Dendritic cell treated with granulocyte-macrophage colony-stimulating factor and Interleukin-4, amounts not matched to agents 40 ng/mL and 50 ng/mL, for 4 days (primary cell): ENCODE measurements at regions of chr16 and their contacts with region 1.

Region 1: DNA sequence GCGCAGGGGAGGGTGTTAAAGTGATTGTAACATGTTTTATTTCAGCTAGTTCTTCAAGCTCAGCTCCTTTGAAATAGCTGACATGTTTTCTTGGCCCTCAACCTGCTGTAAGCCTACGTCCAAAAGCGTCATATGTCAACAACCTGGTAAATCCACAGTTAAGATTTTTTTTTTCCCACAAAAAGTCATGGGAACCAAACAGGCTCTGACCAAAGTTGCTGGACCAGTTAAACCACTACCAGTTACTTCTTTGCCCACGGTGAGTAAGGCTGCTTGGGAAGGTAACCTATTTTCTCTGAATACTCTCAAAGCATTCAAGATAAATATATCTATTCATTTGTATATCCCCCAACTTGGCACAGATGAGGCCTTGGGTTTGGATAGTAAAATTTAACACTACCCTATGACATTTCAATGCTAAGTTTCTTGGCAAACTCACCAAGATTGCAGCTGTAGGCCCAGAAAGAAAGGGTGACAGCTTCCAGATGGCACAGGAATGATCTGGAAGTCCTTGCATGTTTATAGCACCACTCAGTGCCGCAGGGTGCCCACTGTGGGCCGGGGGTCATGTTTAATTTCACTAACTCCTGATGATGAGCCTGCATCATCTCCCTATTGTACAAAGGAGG is 166.2 kb downstream of the XYLT1 start:
- H3K4me3 Mint-ChIP-seq: no peak overlapping the region
- H3K27ac Mint-ChIP-seq: no peak overlapping the region
- H3K4me1 Mint-ChIP-seq: peaks cover 38% of the 10 kb centered on the region
- H3K27me3 Mint-ChIP-seq: no peaks in the 10 kb centered on the region

Region 2: GRCh38 chr16:17277977-17278381 is 26.6 kb before region 1 on chr16:
- intact Hi-C with region 1: loop called (anchors 5 kb)
- H3K4me3 Mint-ChIP-seq: no peak overlapping the region
- H3K27ac Mint-ChIP-seq: no peak overlapping the region
- H3K4me1 Mint-ChIP-seq: peaks cover 40% of the 10 kb centered on the region
- H3K27me3 Mint-ChIP-seq: no peaks in the 10 kb centered on the region